Posterior cingulate gyrus (tissue), 11 donors: ENCODE measurements at regions of chr22 and their contacts with region 1.

Region 1: DNA sequence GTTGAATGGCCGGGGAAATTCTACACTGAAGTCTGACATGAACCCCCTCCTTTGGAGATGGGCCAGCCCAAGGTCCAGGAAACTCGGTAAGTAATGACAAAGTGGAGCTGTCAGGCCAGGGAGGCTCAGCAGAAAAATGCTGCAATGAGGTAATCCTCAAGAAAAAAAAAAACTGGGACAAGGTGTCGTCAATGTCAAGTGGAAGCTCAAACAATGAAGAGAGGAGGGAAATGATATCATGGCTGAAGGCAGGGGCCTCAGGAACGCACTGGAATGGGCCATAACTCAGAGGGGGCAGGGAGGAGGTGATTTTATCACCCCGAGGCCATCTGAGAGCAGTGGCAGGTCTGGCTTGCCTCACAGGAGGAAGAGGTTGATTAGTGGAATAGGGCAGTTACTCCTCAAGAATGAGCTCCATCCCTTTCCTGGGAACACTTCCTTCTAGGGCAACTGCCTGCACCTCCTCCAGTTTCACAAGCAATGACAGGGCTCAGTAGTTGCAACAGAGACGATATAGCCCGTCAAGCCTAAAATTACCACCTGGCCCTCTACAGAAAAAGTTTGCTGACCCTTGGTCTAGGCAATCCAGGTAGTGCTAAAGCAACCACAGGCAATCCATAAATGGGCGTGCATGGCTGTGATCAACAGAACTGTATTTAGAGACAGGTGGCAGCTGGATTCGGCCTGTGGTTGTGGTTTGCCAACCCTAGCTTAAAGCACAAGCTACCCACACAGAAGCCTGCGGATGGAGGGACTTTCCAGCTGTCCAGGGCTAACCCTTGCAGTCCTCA is 65.2 kb downstream of the FBXO7 start:
- DNase-seq: no peak

Region 2: GRCh38 chr22:32655068-32655467 is 115.2 kb after region 1 on chr22:
- intact Hi-C with region 1: loop called (anchors 5 kb)
- DNase-seq: no peak